ENCODE measurements at regions of chr3 and their contacts with region 1.

Region 1: DNA sequence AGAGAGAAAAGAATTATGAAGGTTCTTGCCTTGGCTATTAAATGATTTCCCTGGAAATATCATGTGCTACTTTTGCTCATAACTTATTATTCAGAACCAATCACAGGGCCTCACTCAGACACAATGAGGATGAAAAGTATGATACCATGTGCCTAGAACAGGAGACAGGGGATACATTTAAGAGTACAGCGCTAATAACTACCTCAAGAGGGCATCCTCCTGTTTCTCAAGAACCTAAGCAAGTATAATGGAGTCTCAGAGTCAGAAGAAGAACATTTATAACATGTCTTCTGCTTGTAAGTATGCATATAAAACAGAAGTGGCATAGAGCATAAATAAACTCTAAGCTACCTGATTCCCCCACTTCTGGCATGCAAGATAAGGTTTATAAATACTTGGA is 125.4 kb upstream of the MME start:
- DNase-seq: peak; percentile 77
- H3K4me3 ChIP-seq: no peak overlapping the region
- H3K27ac ChIP-seq: no peak overlapping the region
- H3K4me1 ChIP-seq: peaks cover 4% of the 10 kb centered on the region
- CTCF ChIP-seq: peak; percentile 79

Region 2: DNA sequence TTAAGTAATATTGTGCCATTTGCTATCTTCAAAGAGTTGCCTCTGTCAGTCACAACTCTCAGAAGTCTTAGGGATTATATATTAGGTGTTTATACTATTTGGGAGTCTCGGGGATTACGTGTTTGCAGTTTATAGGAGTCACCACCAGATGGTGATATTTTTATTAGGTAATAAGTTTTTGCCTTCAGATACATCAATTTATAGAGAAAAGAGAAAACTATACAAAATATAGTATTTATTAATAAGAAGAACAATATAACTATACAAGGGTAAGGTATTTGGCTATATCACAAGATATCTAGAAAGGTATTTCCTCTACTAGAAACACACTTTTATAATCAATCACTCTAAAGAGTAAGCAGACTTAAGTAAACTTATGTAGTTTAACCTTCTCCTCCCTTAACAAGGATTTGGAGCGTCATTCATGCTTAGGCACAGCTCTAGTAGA is 619.8 kb before region 1 on chr3:
- CTCF ChIA-PET with region 1: no interaction called
- POLR2A ChIA-PET with region 1: no interaction called
- intact Hi-C with region 1: loop called (anchors 10 kb)
- DNase-seq: peak; percentile 46
- H3K4me3 ChIP-seq: no peak overlapping the region
- H3K27ac ChIP-seq: no peak overlapping the region
- H3K4me1 ChIP-seq: no peaks in the 10 kb centered on the region
- CTCF ChIP-seq: peak; percentile 85

Region 3: GRCh38 chr3:154967090-154967489 is 12.3 kb after region 1 on chr3:
- CTCF ChIA-PET with region 1: no interaction called
- POLR2A ChIA-PET with region 1: interaction called, 11 read pairs
- intact Hi-C with region 1: no loop called
- DNase-seq: no peak
- H3K4me3 ChIP-seq: no peak overlapping the region
- H3K27ac ChIP-seq: no peak overlapping the region
- H3K4me1 ChIP-seq: no peaks in the 10 kb centered on the region
- CTCF ChIP-seq: no peak

Region 4: DNA sequence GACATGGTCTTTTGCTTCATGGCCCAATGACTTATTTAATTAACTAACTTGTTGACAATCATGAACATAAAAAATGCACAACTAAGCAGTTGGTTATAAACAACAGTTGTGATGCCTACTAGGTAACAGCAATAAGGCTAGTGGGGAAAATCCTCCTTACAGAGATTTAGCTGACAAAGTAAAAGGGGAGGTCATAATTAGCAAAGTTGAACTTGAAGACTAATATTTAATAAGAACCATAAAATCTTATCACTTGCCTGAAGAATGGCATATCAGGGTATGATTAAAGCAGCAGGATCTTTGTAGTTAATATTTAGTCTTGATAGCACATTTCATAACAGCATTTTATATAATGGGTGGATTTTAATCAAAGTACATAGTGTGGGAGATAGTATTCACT is 209.6 kb after region 1 on chr3:
- CTCF ChIA-PET with region 1: no interaction called
- POLR2A ChIA-PET with region 1: no interaction called
- intact Hi-C with region 1: loop called (anchors 10 kb)
- DNase-seq: no peak
- H3K4me3 ChIP-seq: no peak overlapping the region
- H3K27ac ChIP-seq: no peak overlapping the region
- H3K4me1 ChIP-seq: no peaks in the 10 kb centered on the region
- CTCF ChIP-seq: no peak

Region 5: DNA sequence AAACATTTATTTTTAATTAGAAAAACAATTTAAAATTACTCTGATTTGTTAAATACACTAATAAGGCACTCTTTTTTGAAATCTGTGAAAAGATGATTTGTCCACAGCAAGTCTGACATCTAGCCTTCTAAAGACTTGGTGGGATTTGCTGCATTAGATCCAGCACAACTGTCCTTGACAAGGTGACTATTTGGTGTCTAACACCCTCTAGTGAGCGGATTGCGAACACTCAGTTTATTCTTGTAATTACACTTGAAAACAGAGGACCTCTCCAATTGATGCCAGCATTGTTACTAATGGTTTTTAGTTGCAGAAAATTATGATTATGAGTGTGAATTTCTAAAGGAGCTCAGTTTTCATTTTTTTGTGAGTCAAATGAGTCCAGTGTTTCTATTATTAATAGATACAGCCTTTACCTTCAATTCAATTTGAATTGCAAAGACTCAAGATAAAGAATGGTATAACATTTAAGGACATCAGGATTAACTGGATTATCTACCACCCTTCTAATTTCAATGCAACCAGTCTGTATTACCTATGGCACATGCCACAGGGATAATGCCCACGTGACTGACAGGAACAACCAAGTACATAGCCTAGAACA is 368.4 kb after region 1 on chr3:
- CTCF ChIA-PET with region 1: interaction called, 3 read pairs
- POLR2A ChIA-PET with region 1: no interaction called
- intact Hi-C with region 1: loop called (anchors 1 kb)
- DNase-seq: peak; percentile 89
- H3K4me3 ChIP-seq: no peak overlapping the region
- H3K27ac ChIP-seq: no peak overlapping the region
- H3K4me1 ChIP-seq: peaks cover 3% of the 10 kb centered on the region
- CTCF ChIP-seq: peak; percentile 97

Measured in OCI-LY7 (cell line).